Naive thymus-derived CD4-positive, alpha-beta T cell (primary cell): ENCODE measurements at regions of chr16 and their contacts with region 1.

Region 1: DNA sequence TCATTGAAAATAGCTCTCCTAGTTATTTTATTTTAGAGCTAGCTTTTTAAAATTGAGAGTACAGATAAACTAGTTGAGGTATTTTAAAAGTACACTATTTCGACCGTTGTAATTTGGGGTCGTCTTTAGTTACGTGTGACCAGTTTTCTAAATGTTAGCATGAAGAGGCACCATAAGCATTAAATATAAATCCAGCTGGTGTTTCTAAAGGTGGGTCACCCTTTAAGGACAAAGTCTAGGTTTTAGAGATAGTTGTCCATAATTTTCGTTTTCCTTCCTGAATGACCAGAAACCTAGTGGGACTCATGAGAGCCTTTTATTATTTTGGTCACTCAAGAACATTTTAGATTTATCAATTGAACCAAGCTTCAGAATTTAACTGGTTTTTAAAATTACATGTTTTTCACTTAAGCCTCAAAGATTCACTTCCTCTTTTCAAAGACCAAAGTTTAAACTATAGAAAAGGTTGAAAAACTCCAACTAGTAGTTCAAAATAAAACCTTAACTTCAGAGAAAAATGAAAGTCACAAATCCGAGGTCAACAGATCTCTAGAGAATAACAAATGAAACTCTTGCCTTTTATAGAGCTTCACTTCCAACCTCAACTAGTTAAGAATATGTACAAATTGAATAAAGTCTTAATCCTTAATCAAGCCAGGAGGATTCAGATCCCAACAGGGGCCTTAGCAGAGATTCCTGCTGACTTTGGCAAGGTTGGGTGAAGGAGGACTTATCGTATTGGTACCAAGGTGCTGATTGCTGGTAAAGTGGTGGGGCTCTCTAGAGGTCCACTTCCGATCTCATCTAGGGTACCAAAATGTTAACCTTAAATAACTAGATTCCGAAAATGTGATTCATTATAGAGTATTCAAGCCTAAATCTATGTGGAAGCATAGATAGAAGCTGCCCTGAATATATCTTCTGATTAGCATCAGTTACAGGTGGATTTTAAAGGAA is 32.5 kb downstream of the PHKB start:
- DNase-seq: peak in 1 of 9 donors; percentile 25
- ATAC-seq: no peak
- H3K4me3 ChIP-seq: no peak overlapping the region
- H3K4me3 Mint-ChIP-seq: peak overlapping the region in 9 of 10 donors; percentile 37 to 90 (median 64)
- H3K27ac ChIP-seq: peak overlapping the region; percentile 54
- H3K27ac Mint-ChIP-seq: peak overlapping the region; percentile 48 to 96 (median 86)
- H3K4me1 ChIP-seq: peaks cover 0 to 13% of the 10 kb centered on the region in 2 donors
- H3K4me1 Mint-ChIP-seq: peaks cover 14 to 71% (median 41%) of the 10 kb centered on the region in 7 donors
- H3K27me3 ChIP-seq: no peaks in the 10 kb centered on the region
- H3K27me3 Mint-ChIP-seq: no peaks in the 10 kb centered on the region

Region 2: DNA sequence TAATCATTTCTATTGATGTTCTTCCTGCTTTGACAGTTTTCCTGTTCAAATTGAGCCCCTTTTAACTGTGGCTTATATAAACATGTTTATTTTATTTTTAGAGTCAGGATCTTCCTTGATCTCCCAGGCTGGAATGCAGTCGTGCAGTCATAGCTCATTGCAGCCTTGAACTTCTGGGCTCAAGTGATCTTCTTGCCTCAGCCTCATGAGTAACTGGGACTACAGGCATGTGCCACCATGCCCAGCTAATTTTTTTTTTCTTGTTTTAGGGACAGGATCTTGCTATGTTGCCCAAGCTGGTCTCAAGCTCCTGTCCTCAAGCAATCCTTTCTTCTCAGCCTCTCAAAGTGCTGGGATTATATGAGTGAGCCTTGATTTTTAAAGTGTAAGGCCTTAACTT is 17.9 kb before region 1 on chr16:
- CTCF ChIA-PET with region 1: no interaction called
- POLR2A ChIA-PET with region 1: no interaction called
- intact Hi-C with region 1: no loop called
- DNase-seq: no peak
- ATAC-seq: no peak
- H3K4me3 ChIP-seq: no peak overlapping the region
- H3K4me3 Mint-ChIP-seq: no peak overlapping the region
- H3K27ac ChIP-seq: no peak overlapping the region
- H3K27ac Mint-ChIP-seq: no peak overlapping the region
- H3K4me1 ChIP-seq: no peaks in the 10 kb centered on the region
- H3K4me1 Mint-ChIP-seq: peaks cover 3 to 52% (median 34%) of the 10 kb centered on the region in 7 donors
- H3K27me3 ChIP-seq: no peaks in the 10 kb centered on the region
- H3K27me3 Mint-ChIP-seq: no peaks in the 10 kb centered on the region

Region 3: GRCh38 chr16:47507701-47508100 is 14.0 kb after region 1 on chr16:
- CTCF ChIA-PET with region 1: no interaction called
- POLR2A ChIA-PET with region 1: no interaction called
- intact Hi-C with region 1: loop called in 1 of 2 experiments (anchors 2 kb)
- DNase-seq: no peak
- ATAC-seq: no peak
- H3K4me3 ChIP-seq: no peak overlapping the region
- H3K4me3 Mint-ChIP-seq: no peak overlapping the region
- H3K27ac ChIP-seq: no peak overlapping the region
- H3K27ac Mint-ChIP-seq: no peak overlapping the region
- H3K4me1 ChIP-seq: no peaks in the 10 kb centered on the region
- H3K4me1 Mint-ChIP-seq: peaks cover 0 to 10% (median 3%) of the 10 kb centered on the region in 7 donors
- H3K27me3 ChIP-seq: no peaks in the 10 kb centered on the region
- H3K27me3 Mint-ChIP-seq: no peaks in the 10 kb centered on the region

Region 4: GRCh38 chr16:47787696-47788095 is 294.0 kb after region 1 on chr16:
- CTCF ChIA-PET with region 1: no interaction called
- POLR2A ChIA-PET with region 1: no interaction called
- intact Hi-C with region 1: no loop called
- DNase-seq: no peak
- ATAC-seq: no peak
- H3K4me3 ChIP-seq: no peak overlapping the region
- H3K4me3 Mint-ChIP-seq: no peak overlapping the region
- H3K27ac ChIP-seq: no peak overlapping the region
- H3K27ac Mint-ChIP-seq: no peak overlapping the region
- H3K4me1 ChIP-seq: no peaks in the 10 kb centered on the region
- H3K4me1 Mint-ChIP-seq: no peaks in the 10 kb centered on the region
- H3K27me3 ChIP-seq: no peaks in the 10 kb centered on the region
- H3K27me3 Mint-ChIP-seq: peaks cover 3 to 16% (median 10%) of the 10 kb centered on the region in 5 donors